ENCODE measurements at regions of chr3 and their contacts with region 1.

Region 1: DNA sequence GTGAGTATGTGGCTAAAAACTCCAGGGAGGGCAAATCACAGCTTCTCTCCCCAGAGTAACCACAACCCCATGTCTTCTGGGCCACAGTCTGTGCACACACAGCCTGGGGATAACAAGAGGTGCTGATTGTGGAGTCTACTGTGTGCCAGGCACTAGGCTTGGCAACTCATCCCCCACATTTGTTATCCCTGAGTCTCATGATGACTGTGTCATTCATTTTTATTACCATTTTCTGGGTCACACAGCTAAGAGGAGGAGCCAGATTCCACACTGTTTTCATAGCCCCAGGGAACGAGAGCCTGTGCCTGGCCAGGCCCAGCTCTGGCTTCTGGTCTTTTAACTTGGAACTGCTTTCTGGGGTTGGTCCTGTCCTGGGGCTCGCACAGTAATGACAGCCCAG is 34.5 kb downstream of the ESYT3 start:
- DNase-seq: no peak
- ATAC-seq: no peak; a peak in 1 of 6 replicates
- H3K4me3 ChIP-seq: no peak overlapping the region
- H3K27ac ChIP-seq: no peak overlapping the region
- H3K4me1 ChIP-seq: no peaks in the 10 kb centered on the region; the same call in 2 of the 3 replicates
- CTCF ChIP-seq: no peak
- EP300 ChIP-seq: no peak
- POLR2A ChIP-seq: no peak
- RAD21 ChIP-seq: no peak

Region 2: GRCh38 chr3:138397983-138398382 is 70.9 kb before region 1 on chr3:
- CTCF ChIA-PET with region 1: no interaction called
- POLR2A ChIA-PET with region 1: no interaction called
- DNase-seq: no peak
- ATAC-seq: peak in 1 of 2 experiments; percentile 59; a peak in 1 of 6 replicates
- H3K4me3 ChIP-seq: no peak overlapping the region
- H3K27ac ChIP-seq: no peak overlapping the region
- H3K4me1 ChIP-seq: no peaks in the 10 kb centered on the region
- CTCF ChIP-seq: no peak
- EP300 ChIP-seq: no peak
- POLR2A ChIP-seq: no peak
- RAD21 ChIP-seq: peak in 1 of 2 experiments; percentile 29; a peak in 2 of 5 replicates

Region 3: DNA sequence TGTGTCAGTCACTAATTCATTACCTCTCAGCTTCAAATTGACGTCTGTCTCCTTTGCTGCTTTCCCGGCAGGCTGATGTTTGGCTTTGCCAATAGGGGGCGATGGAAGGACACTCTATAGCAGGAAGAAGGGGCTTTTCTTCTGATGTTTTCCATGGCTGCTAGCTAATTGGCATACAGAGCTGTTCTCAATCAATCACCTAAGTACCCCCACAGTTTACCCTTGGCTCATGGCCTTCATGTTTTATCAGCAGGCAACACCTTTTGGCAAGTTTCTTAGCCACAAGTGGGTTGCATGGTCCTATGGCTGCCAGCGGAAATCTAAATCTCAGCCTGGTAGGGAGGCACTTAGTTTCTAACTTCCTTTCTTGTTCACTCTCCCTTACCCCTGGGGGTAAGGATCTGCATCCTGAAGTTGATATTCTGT is 10.6 kb after region 1 on chr3:
- CTCF ChIA-PET with region 1: interaction called, 13 read pairs
- POLR2A ChIA-PET with region 1: no interaction called
- DNase-seq: peak; percentile 44 to 45
- ATAC-seq: peak; percentile 64 to 81; a peak in 5 of 6 replicates
- H3K4me3 ChIP-seq: no peak overlapping the region
- H3K27ac ChIP-seq: no peak overlapping the region
- H3K4me1 ChIP-seq: no peaks in the 10 kb centered on the region
- CTCF ChIP-seq: peak; percentile 73
- EP300 ChIP-seq: no peak
- POLR2A ChIP-seq: no peak
- RAD21 ChIP-seq: peak; percentile 76

Region 4: DNA sequence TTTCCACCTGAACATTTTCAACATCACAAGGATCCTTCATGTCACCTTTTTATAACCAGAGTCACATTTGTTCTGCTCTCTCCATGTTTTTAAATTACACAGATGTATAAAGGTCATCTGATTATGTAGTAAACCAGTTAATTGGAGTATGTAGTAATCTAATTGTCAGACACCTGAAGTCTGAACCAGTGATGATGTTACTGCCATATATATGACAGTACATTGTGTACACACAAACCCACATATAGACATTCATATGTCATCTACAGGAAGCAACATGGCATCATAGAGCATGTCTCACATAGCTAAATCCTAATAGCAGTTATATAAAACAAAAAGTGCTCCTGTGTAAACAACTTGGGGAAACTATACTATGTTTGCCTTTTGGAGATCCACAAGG is 671.7 kb after region 1 on chr3:
- CTCF ChIA-PET with region 1: no interaction called
- POLR2A ChIA-PET with region 1: no interaction called
- DNase-seq: no peak
- ATAC-seq: no peak
- H3K4me3 ChIP-seq: no peak overlapping the region
- H3K27ac ChIP-seq: no peak overlapping the region
- H3K4me1 ChIP-seq: no peaks in the 10 kb centered on the region
- CTCF ChIP-seq: no peak
- EP300 ChIP-seq: no peak
- POLR2A ChIP-seq: no peak
- RAD21 ChIP-seq: no peak

Measured in A549 (cell line).